GM13977 (cell line): ENCODE measurements at regions of chr5 and their contacts with region 1.

Region 1: DNA sequence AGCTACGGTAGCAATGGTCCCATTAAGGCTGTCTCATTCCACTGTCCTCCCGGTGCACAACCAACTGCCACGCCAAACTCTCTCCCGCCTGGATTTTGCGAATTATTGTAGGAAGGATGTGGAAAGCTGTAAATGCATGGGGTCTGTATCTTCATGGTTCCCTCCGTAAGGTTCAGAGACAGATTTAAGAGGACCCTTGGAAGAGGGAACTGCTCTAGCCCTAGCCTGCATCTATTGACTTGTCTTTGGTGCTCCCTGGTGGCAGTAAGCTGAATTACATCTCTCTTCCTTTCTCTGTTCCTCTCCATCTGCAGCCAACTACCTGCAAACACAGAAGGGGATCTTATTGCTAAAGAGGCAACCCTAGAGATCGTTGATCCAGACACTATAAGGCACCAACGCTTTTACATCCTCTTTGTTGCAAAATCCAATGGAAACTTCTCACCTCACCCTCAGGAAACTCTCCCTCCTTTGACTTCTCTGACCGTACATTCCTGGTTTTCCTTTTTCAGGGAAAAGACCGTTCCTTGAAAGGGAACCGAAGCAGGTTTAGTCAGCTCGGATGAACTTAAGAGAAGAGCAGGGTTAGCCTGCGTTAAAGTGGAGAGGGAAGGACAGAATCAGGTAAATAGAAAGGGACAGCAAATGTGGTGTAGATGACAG is 11.9 kb downstream of the CAPSL start:
- DNase-seq: peak; percentile 46
- CTCF ChIP-seq: peak; percentile 87

Region 2: DNA sequence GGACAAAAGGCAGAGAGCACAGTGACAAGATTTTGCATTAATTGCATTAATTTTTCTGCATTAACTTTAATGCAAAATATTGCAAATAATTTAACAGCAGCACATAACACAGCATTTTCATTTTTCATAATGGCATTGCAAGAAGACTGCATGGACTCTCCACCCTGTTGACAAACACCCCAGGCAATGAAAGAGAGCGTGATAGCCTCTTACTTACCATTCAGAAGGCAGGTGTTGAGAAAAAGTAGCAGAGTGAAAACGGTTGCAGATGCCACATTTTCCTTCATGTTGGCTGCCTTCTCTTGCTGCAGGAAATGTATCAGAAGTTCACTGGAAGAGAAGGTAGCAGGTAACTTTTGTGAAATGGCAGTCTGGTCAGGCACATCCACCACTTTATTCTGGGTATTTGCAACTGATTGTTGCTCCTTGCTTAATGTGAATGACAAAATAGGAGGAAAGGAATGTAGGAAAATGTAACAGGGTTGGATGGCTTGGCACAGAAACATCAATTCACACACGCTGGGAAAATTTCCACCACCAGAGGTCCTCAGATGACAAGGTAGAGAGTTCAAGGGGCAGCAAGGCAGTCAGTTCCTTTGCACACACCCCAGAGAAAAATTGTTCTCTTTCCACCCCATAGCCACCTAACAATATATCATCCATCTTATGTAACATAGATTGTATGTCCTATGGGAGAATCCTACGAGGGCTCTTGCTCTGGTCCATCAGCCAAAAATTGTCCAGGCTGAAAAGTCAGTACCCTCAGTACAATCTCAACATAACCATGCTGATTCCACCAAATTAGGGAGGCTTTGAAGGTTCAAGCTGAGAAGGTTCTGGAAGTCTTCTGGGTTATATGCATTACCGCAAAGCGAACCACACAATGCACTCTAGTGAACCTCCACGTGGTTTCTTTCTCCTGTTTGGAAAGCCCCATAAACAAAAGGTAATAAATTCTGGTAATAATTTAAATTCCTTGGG is 836.9 kb before region 1 on chr5:
- in situ Hi-C with region 1: loop called (anchors 25 kb)
- DNase-seq: peak; percentile 60
- CTCF ChIP-seq: peak; percentile 70

Region 3: GRCh38 chr5:35644543-35644942 is 282.0 kb before region 1 on chr5:
- in situ Hi-C with region 1: loop called (anchors 25 kb)
- DNase-seq: no peak
- CTCF ChIP-seq: no peak

Region 4: GRCh38 chr5:35777358-35778087 is 149.0 kb before region 1 on chr5:
- in situ Hi-C with region 1: loop called (anchors 10 kb)
- DNase-seq: peak; percentile 22
- CTCF ChIP-seq: peak; percentile 65

Region 5: DNA sequence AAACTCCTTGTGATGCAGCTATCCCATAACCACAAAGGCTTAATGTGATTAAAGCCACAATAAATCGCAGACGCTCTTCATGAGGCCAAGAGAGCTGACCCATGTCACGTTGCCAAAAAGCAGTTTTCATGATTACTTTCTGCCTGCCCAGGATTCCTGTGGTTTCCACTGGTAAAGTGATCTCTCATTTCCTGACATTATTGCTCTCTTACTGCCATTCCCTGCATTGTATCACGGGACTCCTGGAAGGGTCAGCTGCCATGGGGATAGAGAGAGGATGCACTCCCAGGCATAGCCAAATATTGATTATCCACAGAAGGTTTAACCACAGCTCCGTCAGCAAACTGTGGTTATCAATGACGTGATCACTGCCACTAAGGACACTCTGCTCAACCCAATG is 576.1 kb after region 1 on chr5:
- in situ Hi-C with region 1: no loop called
- DNase-seq: no peak
- CTCF ChIP-seq: no peak